Activated CD4-positive, alpha-beta T cell treated with anti-CD3 and anti-CD28 coated beads for 36 hours (primary cell): ENCODE measurements at regions of chr13 and their contacts with region 1.

Region 1: GRCh38 chr13:50911937-50912795 is 2.6 kb downstream of the RNASEH2B start:
- DNase-seq: peak; percentile 96
- ATAC-seq: peak; percentile 52
- H3K4me3 Mint-ChIP-seq: peak overlapping the region; percentile 95
- H3K27ac Mint-ChIP-seq: peak overlapping the region; percentile 99
- H3K4me1 Mint-ChIP-seq: peaks cover 44% of the 10 kb centered on the region
- H3K27me3 Mint-ChIP-seq: no peaks in the 10 kb centered on the region

Region 2: DNA sequence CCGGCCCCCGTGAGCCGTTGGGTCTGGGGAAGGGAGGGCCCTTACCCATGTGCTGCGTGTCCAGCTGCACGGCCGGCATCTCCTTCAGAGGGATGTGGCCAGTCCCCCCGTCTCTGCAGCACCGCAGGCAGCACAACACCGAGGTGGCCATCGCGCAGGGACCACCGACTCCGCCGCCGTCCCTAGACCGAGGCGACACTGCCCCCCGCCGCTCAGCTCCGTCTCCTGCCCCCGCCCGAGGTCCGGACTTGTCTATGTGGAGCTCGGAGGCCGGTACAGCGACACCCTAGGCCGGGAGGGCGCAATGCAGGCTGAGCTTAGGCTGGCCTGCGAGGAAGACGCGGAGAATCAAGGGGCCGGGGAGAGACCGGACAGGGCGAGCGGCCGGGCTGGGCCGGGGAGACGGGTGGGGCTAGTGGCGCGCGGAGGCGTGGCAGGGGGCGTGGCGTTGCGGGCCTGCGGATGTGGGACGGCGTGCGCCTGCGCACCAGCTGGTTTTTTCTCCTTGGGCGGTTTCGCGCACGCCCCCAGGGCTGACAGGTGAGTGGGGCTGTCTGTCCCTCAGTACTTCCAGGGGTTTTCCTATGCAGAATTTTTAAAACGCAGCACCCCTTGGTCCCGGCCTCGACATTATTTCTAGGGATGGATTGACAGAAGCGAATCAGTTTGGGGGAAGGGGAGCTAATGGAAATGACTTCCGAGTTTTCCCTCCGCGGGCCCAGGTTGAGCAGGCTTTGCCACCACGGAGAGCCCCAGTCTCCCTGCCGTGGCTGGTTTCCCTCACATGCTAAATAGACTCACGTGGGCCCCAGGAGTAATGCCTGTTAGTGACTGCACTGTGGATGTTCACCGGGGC is 975.9 kb before region 1 on chr13 and contains the start of gene SPRYD7:
- CTCF ChIA-PET with region 1: no interaction called
- POLR2A ChIA-PET with region 1: interaction called, 3 read pairs
- intact Hi-C with region 1: loop called in 1 of 2 experiments (anchors 1 kb)
- DNase-seq: peak; percentile 98
- ATAC-seq: peak; percentile 98
- H3K4me3 Mint-ChIP-seq: peak within 1 kb of the TSS; percentile 84
- H3K27ac Mint-ChIP-seq: peak within 1 kb of the TSS; percentile 73
- H3K4me1 Mint-ChIP-seq: peaks cover 11% of the 10 kb centered on the region
- H3K27me3 Mint-ChIP-seq: no peaks in the 10 kb centered on the region
- total RNA-seq, gene SPRYD7: 4.8 to 4.9 TPM

Region 3: DNA sequence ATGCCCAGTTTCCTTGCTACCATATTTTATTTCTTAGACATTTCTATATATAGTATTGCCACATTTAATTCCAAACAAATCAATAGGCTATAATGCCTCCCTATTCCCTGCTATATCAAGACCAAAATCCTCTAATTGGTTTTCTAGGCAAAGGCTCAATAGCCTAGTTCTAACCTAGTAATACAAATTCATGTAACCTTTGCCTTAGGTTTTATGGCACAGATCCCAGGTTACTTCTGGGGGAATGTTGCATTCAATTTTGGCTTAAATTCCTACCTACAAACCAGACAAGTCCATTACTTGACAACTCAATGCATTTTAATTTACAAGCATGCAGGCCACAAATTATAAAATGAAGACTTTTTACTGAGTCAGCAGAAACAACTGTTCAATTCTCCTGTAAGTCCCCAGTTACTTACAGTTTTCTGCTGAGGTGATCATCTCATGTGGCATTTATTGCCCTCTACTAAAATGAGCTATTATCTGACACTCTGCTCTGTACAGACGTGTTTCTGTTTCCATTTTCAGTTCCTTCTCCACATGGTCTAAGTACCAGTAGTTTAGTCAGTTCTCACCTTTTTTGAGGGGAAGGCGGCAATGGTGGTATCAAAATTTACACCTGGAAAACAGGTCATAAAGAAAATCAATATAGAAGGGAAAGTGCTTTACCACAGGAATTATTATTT is 885.2 kb before region 1 on chr13:
- CTCF ChIA-PET with region 1: no interaction called
- POLR2A ChIA-PET with region 1: no interaction called
- intact Hi-C with region 1: no loop called
- DNase-seq: no peak
- ATAC-seq: peak; percentile 23
- H3K4me3 Mint-ChIP-seq: no peak overlapping the region
- H3K27ac Mint-ChIP-seq: no peak overlapping the region
- H3K4me1 Mint-ChIP-seq: peaks cover 3% of the 10 kb centered on the region
- H3K27me3 Mint-ChIP-seq: no peaks in the 10 kb centered on the region

Region 4: DNA sequence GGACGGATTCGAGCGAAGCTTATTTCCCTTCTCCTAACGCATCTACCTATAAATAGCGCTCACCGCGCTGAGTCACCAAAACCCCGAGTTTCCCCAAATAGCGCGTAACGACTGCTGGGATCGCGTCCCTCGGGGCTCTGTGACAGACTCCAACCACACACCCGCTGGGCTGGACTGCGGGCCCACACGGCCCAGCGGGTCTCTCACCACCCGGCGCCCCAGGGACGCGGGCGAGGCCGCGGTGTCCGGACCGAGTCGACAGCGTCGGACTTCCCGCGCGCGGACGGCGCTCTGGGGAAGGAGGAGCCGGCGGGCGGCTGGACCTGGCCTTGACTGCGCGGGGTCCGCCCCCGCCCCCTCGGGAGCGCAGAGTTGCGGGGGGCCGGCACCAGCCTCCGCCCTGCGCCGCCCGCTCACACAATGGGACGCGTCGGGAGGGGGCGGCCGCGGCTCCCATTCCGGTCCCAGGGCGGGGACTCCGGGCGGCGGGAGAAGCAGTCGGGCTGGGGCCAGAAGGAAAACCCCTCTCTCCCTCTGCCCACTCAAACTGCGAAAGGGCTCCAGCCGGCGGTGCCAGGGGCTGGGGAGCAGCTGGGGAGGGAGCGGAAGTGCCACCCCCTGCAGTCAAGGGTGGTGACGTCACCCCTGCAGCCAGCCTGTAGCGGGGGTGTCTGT is 788.2 kb before region 1 on chr13:
- CTCF ChIA-PET with region 1: interaction called, 3 read pairs
- POLR2A ChIA-PET with region 1: no interaction called
- intact Hi-C with region 1: loop called in 1 of 2 experiments (anchors 5 kb)
- DNase-seq: peak; percentile 86
- ATAC-seq: peak; percentile 68
- H3K4me3 Mint-ChIP-seq: peak overlapping the region; percentile 72
- H3K27ac Mint-ChIP-seq: peak overlapping the region; percentile 89
- H3K4me1 Mint-ChIP-seq: peaks cover 49% of the 10 kb centered on the region
- H3K27me3 Mint-ChIP-seq: peaks cover 13% of the 10 kb centered on the region

Region 5: DNA sequence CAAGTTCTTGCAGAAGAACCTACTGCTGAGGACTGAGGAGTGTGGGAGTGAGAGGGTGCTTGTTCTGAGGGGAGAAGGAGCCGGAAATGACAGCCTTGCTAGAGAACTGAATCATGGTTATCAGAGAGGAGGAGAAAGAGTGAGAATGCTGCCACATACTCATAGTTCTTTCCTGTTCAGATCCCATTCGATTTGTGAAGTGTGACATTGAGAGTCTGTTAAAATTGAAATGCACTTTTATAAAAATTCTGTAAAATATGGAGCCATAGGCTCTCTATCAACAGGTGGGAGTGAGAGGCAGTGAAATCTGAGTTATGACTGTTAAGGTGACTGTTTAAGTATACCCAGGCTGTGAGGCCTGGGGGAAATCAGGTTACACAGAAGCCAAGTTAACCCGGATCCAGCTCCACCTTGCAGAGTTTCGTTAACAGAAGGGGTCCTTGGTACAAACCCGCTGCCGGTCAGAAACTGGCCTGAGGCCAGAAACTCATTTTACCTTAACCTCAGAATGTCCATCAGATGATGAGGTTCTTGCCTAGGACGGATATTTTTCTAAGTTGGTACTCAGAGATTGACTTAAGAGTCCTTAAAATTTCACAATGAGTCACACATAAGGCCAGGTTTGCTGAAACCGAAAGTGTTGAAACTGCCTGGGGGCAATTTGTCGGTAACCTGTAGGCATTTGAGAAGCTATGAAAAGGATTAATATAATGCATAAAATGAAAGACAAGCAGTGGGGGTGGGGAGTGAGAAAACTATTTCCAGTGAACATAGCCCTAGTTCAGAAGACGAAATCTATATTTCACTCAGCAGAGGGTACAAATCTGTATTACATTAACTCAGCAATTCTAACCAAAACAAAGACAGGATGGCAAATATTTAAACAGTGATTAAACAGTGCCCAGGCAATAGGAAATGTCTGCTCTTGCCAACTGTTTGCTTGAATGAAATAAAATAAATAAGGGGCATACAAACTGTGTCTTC is 546.5 kb before region 1 on chr13:
- CTCF ChIA-PET with region 1: interaction called, 6 read pairs
- POLR2A ChIA-PET with region 1: no interaction called
- intact Hi-C with region 1: loop called (anchors 5 kb)
- DNase-seq: peak; percentile 75
- ATAC-seq: peak; percentile 64
- H3K4me3 Mint-ChIP-seq: peak overlapping the region; percentile 13
- H3K27ac Mint-ChIP-seq: peak overlapping the region; percentile 71
- H3K4me1 Mint-ChIP-seq: peaks cover 43% of the 10 kb centered on the region
- H3K27me3 Mint-ChIP-seq: peaks cover 32% of the 10 kb centered on the region

Region 6: DNA sequence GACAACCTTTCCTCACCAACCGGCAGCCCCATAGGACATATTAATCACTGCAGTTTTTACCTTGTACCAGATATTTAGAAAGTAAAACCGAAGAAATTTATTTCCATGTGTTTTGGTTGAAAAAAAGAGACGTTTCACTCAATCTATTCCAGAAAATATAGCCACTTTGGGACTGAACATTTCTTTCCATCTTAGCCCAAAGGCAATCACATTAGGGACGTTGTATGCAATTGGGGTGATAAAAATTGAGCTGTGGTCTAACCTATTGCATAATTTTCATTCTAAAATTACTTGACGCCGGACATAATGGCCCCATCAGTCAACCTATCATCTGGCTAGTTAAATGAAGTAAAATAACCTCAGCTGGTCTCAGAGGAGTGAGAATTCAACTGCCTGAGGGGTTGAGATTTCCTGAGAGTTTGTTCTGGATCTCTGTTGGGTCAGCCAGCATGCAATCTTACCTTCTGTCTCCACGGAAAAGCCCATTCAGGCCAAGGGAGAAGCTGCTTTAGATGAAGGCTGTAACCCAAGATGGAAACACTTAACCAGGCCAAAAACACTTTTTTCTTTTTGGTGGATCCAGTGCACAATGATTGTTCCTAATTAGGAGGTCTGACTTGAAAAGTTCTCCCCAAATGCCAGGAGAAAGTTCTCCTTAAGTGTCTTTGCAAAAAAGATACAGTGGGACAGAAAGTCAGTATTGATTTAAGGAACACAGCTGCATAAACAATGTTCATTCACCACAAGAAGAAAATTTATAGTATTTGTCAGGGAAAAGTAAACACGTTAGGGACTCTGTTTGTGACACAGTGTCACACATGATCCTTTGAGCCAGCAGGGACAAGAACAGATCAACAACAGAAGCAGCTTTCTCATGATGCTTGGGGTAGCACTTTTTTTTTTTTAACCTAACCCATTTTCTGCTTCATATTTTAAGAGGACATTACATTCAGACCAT is 102.8 kb before region 1 on chr13:
- CTCF ChIA-PET with region 1: interaction called, 17 read pairs
- POLR2A ChIA-PET with region 1: no interaction called
- intact Hi-C with region 1: no loop called
- DNase-seq: no peak
- ATAC-seq: no peak
- H3K4me3 Mint-ChIP-seq: no peak overlapping the region
- H3K27ac Mint-ChIP-seq: no peak overlapping the region
- H3K4me1 Mint-ChIP-seq: peaks cover 4% of the 10 kb centered on the region
- H3K27me3 Mint-ChIP-seq: no peaks in the 10 kb centered on the region

Region 7: GRCh38 chr13:50923272-50923671 is 11.1 kb after region 1 on chr13:
- CTCF ChIA-PET with region 1: interaction called, 19 read pairs
- POLR2A ChIA-PET with region 1: interaction called, 3 read pairs
- intact Hi-C with region 1: no loop called
- DNase-seq: no peak
- ATAC-seq: no peak
- H3K4me3 Mint-ChIP-seq: no peak overlapping the region
- H3K27ac Mint-ChIP-seq: no peak overlapping the region
- H3K4me1 Mint-ChIP-seq: peaks cover 29% of the 10 kb centered on the region
- H3K27me3 Mint-ChIP-seq: no peaks in the 10 kb centered on the region

Region 8: GRCh38 chr13:51000571-51001260 is 88.5 kb after region 1 on chr13:
- CTCF ChIA-PET with region 1: no interaction called
- POLR2A ChIA-PET with region 1: no interaction called
- intact Hi-C with region 1: no loop called
- DNase-seq: no peak
- ATAC-seq: no peak
- H3K4me3 Mint-ChIP-seq: no peak overlapping the region
- H3K27ac Mint-ChIP-seq: no peak overlapping the region
- H3K4me1 Mint-ChIP-seq: no peaks in the 10 kb centered on the region
- H3K27me3 Mint-ChIP-seq: peaks cover 7% of the 10 kb centered on the region

Region 9: GRCh38 chr13:52011632-52012511 is 1099.7 kb after region 1 on chr13 and contains the start of gene ALG11:
- CTCF ChIA-PET with region 1: no interaction called
- POLR2A ChIA-PET with region 1: no interaction called
- intact Hi-C with region 1: loop called in 1 of 2 experiments (anchors 5 kb)
- DNase-seq: peak; percentile 100
- ATAC-seq: peak; percentile 99
- H3K4me3 Mint-ChIP-seq: peak within 1 kb of the TSS; percentile 100
- H3K27ac Mint-ChIP-seq: peak within 1 kb of the TSS; percentile 91
- H3K4me1 Mint-ChIP-seq: peaks cover 20% of the 10 kb centered on the region
- H3K27me3 Mint-ChIP-seq: peaks cover 17% of the 10 kb centered on the region
- total RNA-seq, gene ALG11: 14.1 to 18.1 TPM